GM12878 (cell line): ENCODE measurements at regions of chr13 and their contacts with region 1.

Region 1: DNA sequence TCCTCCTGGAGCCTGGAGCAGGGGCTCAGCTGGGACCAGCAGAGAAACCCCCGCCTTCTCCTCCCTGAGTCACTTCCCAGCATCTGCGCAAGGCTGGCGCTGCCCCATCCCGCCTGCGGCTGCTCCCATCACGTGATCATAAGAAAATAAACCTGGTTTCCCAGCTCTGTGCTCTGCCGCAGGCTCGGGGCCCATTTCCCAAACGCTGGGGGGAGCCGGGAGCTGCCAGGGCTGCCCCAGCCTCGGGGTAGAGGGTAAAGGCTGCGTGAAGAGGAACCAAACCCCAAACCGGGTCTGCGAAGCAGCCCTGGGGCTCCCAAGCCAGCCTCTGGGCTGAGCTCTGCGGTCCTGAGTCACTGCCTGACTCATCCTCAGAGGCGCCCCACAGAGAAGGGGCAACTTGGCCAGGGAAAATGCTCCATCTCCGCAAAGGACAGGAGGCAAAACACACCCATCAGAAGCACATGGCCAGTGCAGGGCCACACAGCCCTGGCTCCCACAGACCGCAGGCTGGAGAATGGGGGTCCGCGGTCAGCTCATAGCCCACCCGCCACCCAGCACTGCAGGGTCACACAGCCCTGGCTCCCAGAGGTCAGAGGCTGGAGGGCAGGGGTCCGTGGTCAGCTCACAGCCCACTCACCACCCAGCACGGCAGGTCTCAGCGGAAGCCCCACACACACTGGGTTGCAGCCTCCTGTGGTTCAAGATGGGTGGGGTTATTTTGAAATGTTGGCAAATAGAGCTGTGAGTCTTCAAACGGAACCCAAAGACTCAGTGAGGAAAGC is 67.1 kb downstream of the RASA3 start:
- DNase-seq: no peak
- ATAC-seq: peak; percentile 73
- H3K4me3 ChIP-seq: peak overlapping the region; percentile 62
- H3K27ac ChIP-seq: peak overlapping the region; percentile 91
- H3K4me1 ChIP-seq: peaks cover 50% of the 10 kb centered on the region
- H3K27me3 ChIP-seq: no peaks in the 10 kb centered on the region
- CTCF ChIP-seq: no peak
- EP300 ChIP-seq: no peak
- POLR2A ChIP-seq: peak; percentile 71
- RAD21 ChIP-seq: no peak

Region 2: DNA sequence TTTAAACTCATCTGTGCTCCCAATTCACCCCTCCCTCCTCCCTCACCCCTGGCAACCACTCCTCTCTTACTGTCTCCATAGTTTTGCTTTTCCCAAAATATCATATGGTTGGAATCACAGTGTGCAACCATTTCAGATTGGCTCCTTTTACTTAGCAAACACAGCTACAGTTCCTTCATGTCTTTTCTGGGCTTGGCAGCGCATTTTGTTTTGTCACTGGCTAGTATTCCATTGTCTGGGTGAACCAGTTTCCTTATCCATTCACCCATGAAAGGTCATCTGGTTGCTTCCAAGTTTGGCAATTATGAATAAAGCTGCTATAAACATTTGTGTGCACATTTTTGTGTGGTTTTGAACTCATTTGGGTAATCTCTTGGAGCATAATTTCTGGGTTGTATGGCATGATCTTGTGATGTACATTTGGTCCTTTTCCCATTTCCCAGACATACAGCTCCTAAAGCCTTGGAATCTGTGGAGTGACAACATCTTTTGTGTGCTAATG is 177.6 kb before region 1 on chr13:
- CTCF ChIA-PET with region 1: no interaction called
- POLR2A ChIA-PET with region 1: no interaction called
- RAD21 ChIA-PET with region 1: no interaction called
- SMC1A ChIA-PET with region 1: no interaction called
- in situ Hi-C with region 1: no loop called
- intact Hi-C with region 1: no loop called
- DNase-seq: no peak
- ATAC-seq: no peak
- H3K4me3 ChIP-seq: no peak overlapping the region
- H3K27ac ChIP-seq: no peak overlapping the region
- H3K4me1 ChIP-seq: no peaks in the 10 kb centered on the region
- H3K27me3 ChIP-seq: peaks cover 0 to 3% of the 10 kb centered on the region in 2 experiments; a peak in 1 of 4 replicates
- CTCF ChIP-seq: no peak
- EP300 ChIP-seq: no peak
- POLR2A ChIP-seq: no peak
- RAD21 ChIP-seq: no peak

Region 3: DNA sequence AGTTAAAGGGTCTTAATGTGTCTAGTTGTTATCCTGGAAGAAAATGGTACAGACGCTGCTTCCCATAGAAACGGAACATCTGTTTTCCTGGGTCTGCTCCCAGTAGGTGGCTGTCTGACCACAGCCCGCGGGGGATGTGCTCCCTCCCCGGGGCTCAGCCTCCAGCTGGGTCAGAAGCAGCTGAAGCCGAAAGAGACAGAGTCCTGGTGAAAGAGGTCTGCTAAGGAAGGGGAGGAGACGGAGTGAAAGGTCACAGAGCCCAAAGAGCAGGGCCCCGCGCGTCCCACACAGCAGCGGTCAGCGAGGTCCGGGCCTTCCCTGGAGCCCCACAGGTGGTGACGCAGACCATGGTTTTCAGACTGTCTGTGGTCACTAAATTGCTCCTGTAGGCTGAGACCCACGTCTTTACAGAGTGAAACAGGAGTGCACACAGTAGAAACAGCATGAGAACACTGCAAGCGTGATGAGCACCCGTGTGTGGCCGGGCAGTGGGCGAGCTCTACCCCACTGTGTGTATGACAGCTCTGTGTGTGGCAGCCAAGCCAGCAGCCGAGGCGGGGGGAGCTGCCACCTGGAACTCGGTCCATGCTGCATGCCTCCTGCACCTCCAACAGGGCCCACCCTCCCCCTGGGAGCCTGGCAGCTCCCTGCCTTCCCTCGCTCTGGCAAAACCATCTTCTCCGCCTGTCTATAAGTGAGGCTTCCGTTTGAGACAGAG is 39.5 kb before region 1 on chr13:
- CTCF ChIA-PET with region 1: no interaction called
- POLR2A ChIA-PET with region 1: no interaction called
- RAD21 ChIA-PET with region 1: no interaction called
- SMC1A ChIA-PET with region 1: no interaction called
- in situ Hi-C with region 1: no loop called
- intact Hi-C with region 1: loop called (anchors 2 kb)
- DNase-seq: no peak
- ATAC-seq: no peak
- H3K4me3 ChIP-seq: no peak overlapping the region
- H3K27ac ChIP-seq: no peak overlapping the region
- H3K4me1 ChIP-seq: peaks cover 40% of the 10 kb centered on the region
- H3K27me3 ChIP-seq: no peaks in the 10 kb centered on the region
- CTCF ChIP-seq: no peak
- EP300 ChIP-seq: no peak
- POLR2A ChIP-seq: no peak
- RAD21 ChIP-seq: no peak

Region 4: DNA sequence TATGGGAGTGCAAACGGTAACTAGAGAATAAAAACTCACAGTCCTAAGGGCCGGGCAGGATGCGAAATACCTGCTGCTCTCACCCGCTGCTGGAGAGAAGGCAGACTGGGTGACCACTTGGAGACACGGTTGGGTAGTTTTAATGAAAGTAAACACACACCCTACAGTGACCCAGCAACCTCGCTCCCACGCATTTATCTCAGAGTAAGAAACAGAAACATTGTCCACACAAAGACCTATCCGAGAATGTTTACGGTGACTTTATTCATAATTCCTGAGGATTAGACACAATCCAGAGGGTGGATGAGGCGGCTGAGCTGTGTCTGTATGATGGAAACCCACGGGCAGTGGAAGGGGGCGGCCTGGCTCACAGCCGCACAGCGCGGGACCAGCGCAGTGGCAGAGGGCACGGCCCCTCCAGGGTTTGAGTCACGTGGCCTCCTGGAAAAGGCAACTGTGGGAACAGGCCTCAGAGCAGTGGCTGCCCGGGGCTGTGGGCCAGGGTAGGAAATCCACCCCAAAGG is 17.9 kb before region 1 on chr13:
- CTCF ChIA-PET with region 1: interaction called, 4 read pairs
- POLR2A ChIA-PET with region 1: no interaction called
- RAD21 ChIA-PET with region 1: interaction called, 6 read pairs
- SMC1A ChIA-PET with region 1: interaction called, 9 read pairs
- in situ Hi-C with region 1: no loop called
- intact Hi-C with region 1: loop called (anchors 1 kb)
- DNase-seq: peak; percentile 74
- ATAC-seq: peak; percentile 92
- H3K4me3 ChIP-seq: no peak overlapping the region
- H3K27ac ChIP-seq: peak overlapping the region; percentile 17; the same call in 1 of the 2 replicates
- H3K4me1 ChIP-seq: peaks cover 30% of the 10 kb centered on the region
- H3K27me3 ChIP-seq: no peaks in the 10 kb centered on the region
- CTCF ChIP-seq: no peak
- EP300 ChIP-seq: no peak
- POLR2A ChIP-seq: no peak
- RAD21 ChIP-seq: no peak

Region 5: GRCh38 chr13:114078461-114079451 is 13.4 kb after region 1 on chr13:
- CTCF ChIA-PET with region 1: no interaction called
- POLR2A ChIA-PET with region 1: no interaction called
- RAD21 ChIA-PET with region 1: no interaction called
- SMC1A ChIA-PET with region 1: no interaction called
- in situ Hi-C with region 1: no loop called
- intact Hi-C with region 1: no loop called
- DNase-seq: no peak
- ATAC-seq: no peak; the same call in 2 of the 3 replicates
- H3K4me3 ChIP-seq: no peak overlapping the region
- H3K27ac ChIP-seq: no peak overlapping the region
- H3K4me1 ChIP-seq: no peaks in the 10 kb centered on the region
- H3K27me3 ChIP-seq: no peaks in the 10 kb centered on the region
- CTCF ChIP-seq: no peak
- EP300 ChIP-seq: no peak
- POLR2A ChIP-seq: no peak
- RAD21 ChIP-seq: no peak

Region 6: GRCh38 chr13:114128624-114129522 is 63.5 kb after region 1 on chr13:
- CTCF ChIA-PET with region 1: interaction called, 5 read pairs
- POLR2A ChIA-PET with region 1: interaction called, 5 read pairs
- RAD21 ChIA-PET with region 1: interaction called, 9 read pairs
- SMC1A ChIA-PET with region 1: interaction called, 9 read pairs
- in situ Hi-C with region 1: loop called (anchors 5 kb)
- intact Hi-C with region 1: loop called (anchors 1 kb)
- DNase-seq: peak; percentile 81
- ATAC-seq: peak; percentile 72
- H3K4me3 ChIP-seq: peak overlapping the region; percentile 89
- H3K27ac ChIP-seq: peak overlapping the region; percentile 84
- H3K4me1 ChIP-seq: peaks cover 43% of the 10 kb centered on the region
- H3K27me3 ChIP-seq: no peaks in the 10 kb centered on the region
- CTCF ChIP-seq: no peak
- EP300 ChIP-seq: peak; percentile 29 to 69; a peak in 2 of 4 replicates
- POLR2A ChIP-seq: no peak; the same call in 1 of the 2 replicates
- RAD21 ChIP-seq: no peak